OCI-LY7 (cell line): ENCODE measurements at regions of chr3 and their contacts with region 1.

Region 1: DNA sequence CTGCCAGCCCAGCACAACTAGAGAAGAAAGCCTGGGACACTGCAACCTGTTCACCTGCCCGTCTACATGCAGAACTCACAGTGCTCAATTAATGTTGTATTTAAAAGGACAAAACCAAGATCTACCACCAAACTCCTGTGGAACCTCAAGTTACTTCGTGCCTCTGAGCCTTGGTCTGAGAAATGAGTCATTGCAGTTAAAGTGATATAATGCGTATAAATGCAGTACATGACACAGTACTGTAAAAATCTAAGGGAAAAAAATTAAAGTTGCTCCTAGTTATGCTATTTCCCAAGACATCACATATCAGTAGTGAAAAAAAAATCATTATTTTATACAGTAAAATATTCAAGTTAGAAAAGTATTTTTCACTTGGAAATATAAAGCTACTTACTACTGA is 138.9 kb downstream of the ZIC4 start:
- DNase-seq: no peak
- H3K4me3 ChIP-seq: no peak overlapping the region
- H3K27ac ChIP-seq: no peak overlapping the region
- H3K4me1 ChIP-seq: no peaks in the 10 kb centered on the region
- CTCF ChIP-seq: no peak

Region 2: GRCh38 chr3:147554332-147554731 is 286.9 kb after region 1 on chr3:
- CTCF ChIA-PET with region 1: no interaction called
- POLR2A ChIA-PET with region 1: no interaction called
- intact Hi-C with region 1: no loop called
- DNase-seq: no peak
- H3K4me3 ChIP-seq: no peak overlapping the region
- H3K27ac ChIP-seq: no peak overlapping the region
- H3K4me1 ChIP-seq: no peaks in the 10 kb centered on the region
- CTCF ChIP-seq: no peak

Region 3: GRCh38 chr3:147915057-147915456 is 647.6 kb after region 1 on chr3:
- CTCF ChIA-PET with region 1: interaction called, 10 read pairs
- POLR2A ChIA-PET with region 1: no interaction called
- intact Hi-C with region 1: no loop called
- DNase-seq: no peak
- H3K4me3 ChIP-seq: no peak overlapping the region
- H3K27ac ChIP-seq: no peak overlapping the region
- H3K4me1 ChIP-seq: no peaks in the 10 kb centered on the region
- CTCF ChIP-seq: no peak